ENCODE measurements at regions of chr1 and their contacts with region 1.

Region 1: GRCh38 chr1:171141688-171142415 is 43.2 kb upstream of the FMO2 start:
- DNase-seq: peak; percentile 51 to 74 (median 65)
- ATAC-seq: peak; percentile 76 to 89 (median 84)
- H3K4me3 ChIP-seq: peak overlapping the region in 4 of 12 donors; percentile 1 to 22 (median 18)
- H3K27ac ChIP-seq: peak overlapping the region; percentile 79 to 94 (median 86)
- H3K4me1 ChIP-seq: peaks cover 0 to 75% (median 49%) of the 10 kb centered on the region in 12 donors
- H3K27me3 ChIP-seq: no peaks in the 10 kb centered on the region
- CTCF ChIP-seq: peak in 7 of 12 donors; percentile 21 to 54 (median 39)
- POLR2A ChIP-seq: no peak

Region 2: GRCh38 chr1:171110621-171111326 is 31.1 kb before region 1 on chr1:
- intact Hi-C with region 1: loop called in 4 of 10 experiments (anchors 2 to 5 kb)
- DNase-seq: no peak
- ATAC-seq: peak in 3 of 4 donors; percentile 53 to 73 (median 58)
- H3K4me3 ChIP-seq: no peak overlapping the region
- H3K27ac ChIP-seq: peak overlapping the region; percentile 9 to 80 (median 56)
- H3K4me1 ChIP-seq: peaks cover 0 to 37% (median 5%) of the 10 kb centered on the region in 12 donors
- H3K27me3 ChIP-seq: no peaks in the 10 kb centered on the region
- CTCF ChIP-seq: no peak
- POLR2A ChIP-seq: no peak

Region 3: GRCh38 chr1:171196351-171196750 is 54.5 kb after region 1 on chr1:
- intact Hi-C with region 1: no loop called
- DNase-seq: no peak
- ATAC-seq: no peak
- H3K4me3 ChIP-seq: no peak overlapping the region
- H3K27ac ChIP-seq: no peak overlapping the region
- H3K4me1 ChIP-seq: peaks cover 0 to 33% (median 14%) of the 10 kb centered on the region in 12 donors
- H3K27me3 ChIP-seq: no peaks in the 10 kb centered on the region
- CTCF ChIP-seq: no peak
- POLR2A ChIP-seq: no peak

Region 4: DNA sequence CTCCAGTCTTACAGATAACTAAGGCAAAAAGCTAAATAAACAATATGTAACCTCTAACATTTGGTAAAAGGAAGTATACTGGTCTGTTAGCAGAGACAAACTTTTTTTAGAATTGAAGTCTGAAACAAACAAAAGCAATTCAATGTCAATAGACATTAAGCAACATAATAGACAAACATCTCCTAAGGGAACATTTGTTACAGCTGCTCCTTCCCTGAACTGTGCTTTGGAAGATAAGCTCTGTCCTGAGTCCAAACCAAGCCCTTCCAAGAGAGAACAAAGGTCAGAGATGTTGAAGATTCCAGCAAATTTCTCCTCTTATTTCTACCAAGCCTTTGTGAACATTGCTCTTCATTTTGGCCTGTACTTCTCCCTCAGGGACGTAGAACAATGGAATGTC is 68.5 kb after region 1 on chr1:
- intact Hi-C with region 1: loop called in 1 of 10 experiments (anchors 2 kb)
- DNase-seq: peak in 1 of 5 donors; percentile 25
- ATAC-seq: peak; percentile 60 to 84 (median 84)
- H3K4me3 ChIP-seq: no peak overlapping the region
- H3K27ac ChIP-seq: peak overlapping the region in 9 of 12 donors; percentile 2 to 59 (median 13)
- H3K4me1 ChIP-seq: peaks cover 0 to 39% (median 20%) of the 10 kb centered on the region in 12 donors
- H3K27me3 ChIP-seq: no peaks in the 10 kb centered on the region
- CTCF ChIP-seq: no peak
- POLR2A ChIP-seq: no peak

Measured in heart left ventricle (tissue), 16 donors.